ENCODE measurements at regions of chr5 and their contacts with region 1.

Region 1: GRCh38 chr5:179697993-179698934 is 503 bp upstream of the CANX start:
- DNase-seq: peak; percentile 96
- ATAC-seq: peak; percentile 89
- H3K4me3 Mint-ChIP-seq: peak overlapping the region; percentile 97
- H3K27ac Mint-ChIP-seq: peak overlapping the region; percentile 99
- H3K4me1 Mint-ChIP-seq: peaks cover 41% of the 10 kb centered on the region
- H3K27me3 Mint-ChIP-seq: no peaks in the 10 kb centered on the region
- CTCF ChIP-seq: no peak

Region 2: DNA sequence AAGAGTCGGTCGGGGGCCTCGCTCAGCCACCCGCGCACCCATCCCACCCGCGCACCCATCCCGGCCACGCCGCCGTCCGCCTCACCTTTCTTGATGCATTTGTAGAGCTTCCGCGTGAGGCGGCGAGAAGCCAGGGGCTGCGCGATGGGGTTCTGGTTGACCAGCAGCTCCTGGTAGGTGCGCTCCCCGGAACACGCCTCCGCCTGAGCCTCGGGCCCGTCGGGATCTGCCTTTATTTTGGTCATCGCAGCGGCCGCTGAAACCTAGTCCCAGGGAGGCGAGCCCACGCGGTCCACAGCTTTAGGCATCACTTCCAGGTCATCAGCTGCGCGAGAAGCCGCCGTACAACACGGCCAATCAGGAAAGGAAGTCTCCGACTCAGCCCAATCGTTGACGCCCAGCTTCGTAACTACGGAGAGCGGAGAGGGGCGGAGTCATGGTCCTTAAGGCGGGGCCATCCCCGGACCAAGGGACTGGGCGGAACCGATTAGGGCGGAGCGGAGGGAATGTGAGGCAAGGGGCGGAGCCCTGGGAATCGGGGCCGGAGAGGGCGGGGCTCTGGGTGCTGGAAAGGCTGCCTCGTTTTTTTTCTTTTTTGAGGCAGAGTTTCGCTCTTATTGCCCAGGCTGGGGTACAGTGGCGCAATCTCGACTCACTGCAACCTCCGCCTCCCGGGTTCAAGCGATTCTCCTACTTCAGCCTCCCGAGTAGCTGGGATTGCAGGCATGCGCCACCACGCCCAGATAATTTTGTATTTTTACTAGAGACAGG is 1544.5 kb before region 1 on chr5 and contains the start of gene NHP2:
- CTCF ChIA-PET with region 1: no interaction called
- POLR2A ChIA-PET with region 1: no interaction called
- intact Hi-C with region 1: loop called (anchors 5 kb)
- DNase-seq: peak; percentile 95
- ATAC-seq: peak; percentile 99
- H3K4me3 Mint-ChIP-seq: peak within 1 kb of the TSS; percentile 96
- H3K27ac Mint-ChIP-seq: peak within 1 kb of the TSS; percentile 83
- H3K4me1 Mint-ChIP-seq: peaks cover 37% of the 10 kb centered on the region
- H3K27me3 Mint-ChIP-seq: no peaks in the 10 kb centered on the region
- CTCF ChIP-seq: no peak
- total RNA-seq, gene NHP2: 175 and 180 TPM in 2 replicates

Region 3: DNA sequence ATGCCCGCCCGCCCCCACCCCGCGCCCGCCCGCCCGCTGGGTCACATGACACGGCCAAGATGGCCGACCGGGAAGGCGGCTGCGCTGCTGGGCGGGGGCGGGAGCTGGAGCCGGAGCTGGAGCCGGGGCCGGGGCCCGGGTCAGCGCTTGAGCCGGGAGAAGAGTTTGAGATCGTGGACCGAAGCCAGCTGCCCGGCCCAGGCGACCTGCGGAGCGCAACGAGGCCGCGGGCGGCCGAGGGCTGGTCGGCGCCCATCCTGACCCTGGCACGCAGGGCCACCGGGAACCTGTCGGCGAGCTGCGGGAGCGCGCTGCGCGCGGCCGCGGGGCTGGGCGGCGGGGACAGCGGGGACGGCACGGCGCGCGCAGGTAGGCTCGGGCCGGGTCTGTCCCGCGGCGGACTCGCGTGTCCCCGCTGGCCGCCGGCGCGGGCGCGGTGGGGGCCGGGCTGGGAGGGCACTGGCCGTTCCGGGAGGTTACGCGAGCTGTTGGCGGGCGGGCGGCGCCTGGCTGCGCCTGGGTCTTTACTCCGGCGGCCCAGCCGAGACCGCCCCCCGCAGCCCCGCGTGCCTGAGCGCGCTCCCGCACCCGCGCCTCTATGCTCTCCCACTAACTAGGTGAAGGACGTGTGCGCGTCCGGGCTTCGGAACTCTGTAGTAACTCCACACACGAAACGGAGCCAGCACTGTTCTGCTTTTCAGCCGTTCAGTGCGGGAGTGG is 147.6 kb before region 1 on chr5 and contains the start of gene RUFY1:
- CTCF ChIA-PET with region 1: no interaction called
- POLR2A ChIA-PET with region 1: interaction called, 7 read pairs
- intact Hi-C with region 1: loop called (anchors 1 kb)
- DNase-seq: peak; percentile 91
- ATAC-seq: peak; percentile 70
- H3K4me3 Mint-ChIP-seq: peak within 1 kb of the TSS; percentile 97
- H3K27ac Mint-ChIP-seq: peak within 1 kb of the TSS; percentile 100
- H3K4me1 Mint-ChIP-seq: peaks cover 60% of the 10 kb centered on the region
- H3K27me3 Mint-ChIP-seq: no peaks in the 10 kb centered on the region
- CTCF ChIP-seq: no peak
- total RNA-seq, gene RUFY1: 83.0 and 95.8 TPM in 2 replicates

Region 4: GRCh38 chr5:179678223-179679013 is 19.8 kb before region 1 on chr5:
- CTCF ChIA-PET with region 1: interaction called, 4 read pairs
- POLR2A ChIA-PET with region 1: interaction called, 24 read pairs
- intact Hi-C with region 1: loop called (anchors 1 kb)
- DNase-seq: peak; percentile 91
- ATAC-seq: peak; percentile 91
- H3K4me3 Mint-ChIP-seq: peak overlapping the region; percentile 96
- H3K27ac Mint-ChIP-seq: peak overlapping the region; percentile 94
- H3K4me1 Mint-ChIP-seq: peaks cover 32% of the 10 kb centered on the region
- H3K27me3 Mint-ChIP-seq: no peaks in the 10 kb centered on the region
- CTCF ChIP-seq: no peak

Region 5: GRCh38 chr5:179858586-179859427 is 160.5 kb after region 1 on chr5 and contains the start of gene MRNIP:
- CTCF ChIA-PET with region 1: no interaction called
- POLR2A ChIA-PET with region 1: no interaction called
- intact Hi-C with region 1: loop called (anchors 10 kb)
- DNase-seq: peak; percentile 92
- ATAC-seq: peak; percentile 94
- H3K4me3 Mint-ChIP-seq: peak within 1 kb of the TSS; percentile 96
- H3K27ac Mint-ChIP-seq: peak within 1 kb of the TSS; percentile 89
- H3K4me1 Mint-ChIP-seq: peaks cover 33% of the 10 kb centered on the region
- H3K27me3 Mint-ChIP-seq: no peaks in the 10 kb centered on the region
- CTCF ChIP-seq: no peak
- total RNA-seq, gene MRNIP: 54.6 and 70.0 TPM in 2 replicates

Region 6: GRCh38 chr5:180071531-180072255 is 373.4 kb after region 1 on chr5 and contains the start of gene RNF130:
- CTCF ChIA-PET with region 1: no interaction called
- POLR2A ChIA-PET with region 1: no interaction called
- intact Hi-C with region 1: loop called (anchors 1 kb)
- DNase-seq: peak; percentile 91
- ATAC-seq: peak; percentile 83
- H3K4me3 Mint-ChIP-seq: peak within 1 kb of the TSS; percentile 89
- H3K27ac Mint-ChIP-seq: peak within 1 kb of the TSS; percentile 84
- H3K4me1 Mint-ChIP-seq: peaks cover 28% of the 10 kb centered on the region
- H3K27me3 Mint-ChIP-seq: peaks cover 2% of the 10 kb centered on the region
- CTCF ChIP-seq: no peak
- total RNA-seq, gene RNF130: 17.6 and 18.5 TPM in 2 replicates

Measured in activated B cell treated with CpG ODN at 0.5 μM for 24 hours (primary cell).